WTC11 (cell line): ENCODE measurements at regions of chr17 and their contacts with region 1.

Region 1: GRCh38 chr17:48804925-48805411 is 12.1 kb downstream of the TTLL6 start:
- DNase-seq: peak; percentile 94
- ATAC-seq: peak; percentile 99
- H3K4me3 Mint-ChIP-seq: peak overlapping the region; percentile 24; the same call in 1 of the 2 replicates
- H3K27ac Mint-ChIP-seq: no peak overlapping the region
- H3K4me1 Mint-ChIP-seq: peaks cover 5% of the 10 kb centered on the region
- H3K27me3 Mint-ChIP-seq: no peaks in the 10 kb centered on the region
- CTCF ChIP-seq: peak; percentile 95

Region 2: DNA sequence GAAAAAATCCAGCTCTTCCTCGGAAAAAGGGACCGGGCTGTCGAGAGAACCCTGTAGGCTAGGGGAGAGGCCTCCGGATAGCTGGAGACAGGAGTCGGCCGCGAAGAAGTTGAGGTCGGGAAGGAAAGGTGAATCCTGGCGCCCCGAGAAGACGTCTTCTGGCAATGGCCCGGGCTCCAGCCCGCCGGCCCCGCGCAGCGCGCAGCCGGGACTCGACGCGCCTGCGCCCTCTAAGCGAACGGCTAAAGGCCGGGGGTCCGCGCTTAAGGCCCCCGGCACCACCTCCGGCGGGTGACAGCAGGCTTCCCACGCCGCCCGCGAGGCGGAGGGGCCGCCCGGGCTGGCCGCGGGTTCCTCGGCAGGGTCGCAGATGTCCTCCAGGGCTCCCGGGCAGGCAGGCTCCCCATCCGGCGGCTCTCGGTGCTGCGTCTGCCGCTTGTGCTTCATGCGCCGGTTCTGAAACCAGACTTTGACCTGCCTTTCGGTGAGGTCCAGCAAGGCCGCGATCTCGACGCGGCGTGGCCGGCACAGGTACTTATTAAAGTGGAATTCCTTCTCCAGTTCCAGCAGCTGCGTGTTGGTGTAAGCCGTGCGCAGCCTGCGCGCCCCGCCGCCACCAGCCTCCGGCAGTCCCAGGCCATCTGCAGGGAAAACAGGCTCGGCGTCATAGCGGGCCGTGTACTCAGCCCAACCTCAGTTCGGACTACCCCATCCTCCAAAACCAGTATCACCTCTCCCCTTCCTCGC is 261.7 kb before region 1 on chr17:
- CTCF ChIA-PET with region 1: no interaction called
- POLR2A ChIA-PET with region 1: no interaction called
- DNase-seq: peak; percentile 56
- ATAC-seq: peak; percentile 39
- H3K4me3 Mint-ChIP-seq: peak overlapping the region; percentile 69
- H3K27ac Mint-ChIP-seq: no peak overlapping the region
- H3K4me1 Mint-ChIP-seq: peaks cover 66% of the 10 kb centered on the region
- H3K27me3 Mint-ChIP-seq: peaks cover 98% of the 10 kb centered on the region; the same call in 1 of the 2 replicates
- CTCF ChIP-seq: no peak

Region 3: DNA sequence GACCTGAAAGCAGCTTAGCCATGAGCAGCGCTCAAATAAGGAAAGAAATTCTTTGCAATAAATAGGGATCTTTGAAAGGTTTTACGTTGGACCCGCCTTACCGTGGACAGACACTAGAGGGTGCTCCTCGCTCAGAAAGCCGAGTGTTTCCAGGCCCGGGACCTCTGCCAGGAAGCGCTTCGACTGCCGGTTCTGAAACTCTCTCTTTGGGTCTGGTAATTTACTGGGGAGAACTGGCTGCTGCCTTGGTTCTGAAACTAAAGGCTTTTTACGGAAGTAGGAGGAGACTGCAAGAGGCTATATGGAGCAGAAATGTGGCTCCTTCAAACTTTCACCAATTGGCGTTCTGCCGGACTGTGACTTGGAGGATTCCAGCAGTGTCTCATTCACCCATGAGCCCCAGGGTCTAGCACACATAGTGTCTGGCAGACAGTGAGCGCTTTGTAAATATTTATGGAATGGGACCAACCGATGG is 133.2 kb before region 1 on chr17:
- CTCF ChIA-PET with region 1: interaction called, 52 read pairs
- POLR2A ChIA-PET with region 1: interaction called, 3 read pairs
- DNase-seq: peak; percentile 87
- ATAC-seq: peak; percentile 96
- H3K4me3 Mint-ChIP-seq: peak overlapping the region; percentile 72
- H3K27ac Mint-ChIP-seq: no peak overlapping the region
- H3K4me1 Mint-ChIP-seq: peaks cover 12% of the 10 kb centered on the region
- H3K27me3 Mint-ChIP-seq: peaks cover 53% of the 10 kb centered on the region
- CTCF ChIP-seq: peak; percentile 79

Region 4: DNA sequence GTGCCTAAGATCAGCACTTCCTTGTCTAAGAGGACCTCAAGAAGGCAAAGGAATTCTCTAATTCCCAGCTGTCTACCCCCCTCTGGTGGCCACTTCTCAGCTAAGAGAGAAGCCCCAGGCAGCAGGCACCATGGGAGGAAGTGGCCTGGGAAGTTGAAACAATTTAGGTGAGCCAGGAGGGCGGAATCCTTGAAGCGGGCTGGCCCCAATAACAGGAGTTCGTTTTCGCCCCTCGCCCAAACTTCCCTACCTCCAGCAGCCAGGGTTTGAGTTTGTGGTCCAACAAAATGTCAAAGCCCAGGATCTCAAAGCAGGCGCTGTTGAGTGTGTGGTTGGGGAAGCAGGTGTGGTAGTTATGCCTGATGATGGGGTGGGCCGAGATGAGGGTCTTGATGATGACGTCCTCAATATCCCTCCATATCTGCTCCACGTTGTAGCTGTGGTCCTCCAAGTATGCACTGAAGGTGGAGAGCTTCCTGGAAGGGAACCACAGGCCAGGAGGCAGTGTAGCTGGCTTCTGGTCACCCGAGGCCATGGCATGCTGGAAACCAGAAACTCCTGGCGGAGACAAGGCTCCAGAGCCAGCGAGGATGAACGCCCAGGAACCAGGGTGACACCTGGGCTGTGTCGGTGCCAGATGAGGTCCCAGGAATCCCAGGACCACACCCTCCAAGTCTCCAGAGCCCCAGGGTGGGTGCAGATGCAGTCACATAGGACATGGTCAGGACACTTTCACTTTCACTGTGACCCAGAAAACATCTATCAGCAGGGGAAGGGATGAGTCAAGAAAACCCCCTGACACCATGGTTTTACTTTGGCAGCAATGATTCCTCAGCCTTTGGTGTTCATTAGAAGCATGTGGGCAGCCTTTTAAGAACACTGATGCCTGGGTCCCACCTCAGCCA is 13.6 kb before region 1 on chr17:
- CTCF ChIA-PET with region 1: interaction called, 39 read pairs
- POLR2A ChIA-PET with region 1: interaction called, 4 read pairs
- DNase-seq: peak; percentile 85
- ATAC-seq: peak; percentile 92
- H3K4me3 Mint-ChIP-seq: no peak overlapping the region
- H3K27ac Mint-ChIP-seq: no peak overlapping the region
- H3K4me1 Mint-ChIP-seq: peaks cover 9% of the 10 kb centered on the region
- H3K27me3 Mint-ChIP-seq: peaks cover 2% of the 10 kb centered on the region; the same call in 1 of the 2 replicates
- CTCF ChIP-seq: peak; percentile 45; the same call in 1 of the 2 replicates

Region 5: DNA sequence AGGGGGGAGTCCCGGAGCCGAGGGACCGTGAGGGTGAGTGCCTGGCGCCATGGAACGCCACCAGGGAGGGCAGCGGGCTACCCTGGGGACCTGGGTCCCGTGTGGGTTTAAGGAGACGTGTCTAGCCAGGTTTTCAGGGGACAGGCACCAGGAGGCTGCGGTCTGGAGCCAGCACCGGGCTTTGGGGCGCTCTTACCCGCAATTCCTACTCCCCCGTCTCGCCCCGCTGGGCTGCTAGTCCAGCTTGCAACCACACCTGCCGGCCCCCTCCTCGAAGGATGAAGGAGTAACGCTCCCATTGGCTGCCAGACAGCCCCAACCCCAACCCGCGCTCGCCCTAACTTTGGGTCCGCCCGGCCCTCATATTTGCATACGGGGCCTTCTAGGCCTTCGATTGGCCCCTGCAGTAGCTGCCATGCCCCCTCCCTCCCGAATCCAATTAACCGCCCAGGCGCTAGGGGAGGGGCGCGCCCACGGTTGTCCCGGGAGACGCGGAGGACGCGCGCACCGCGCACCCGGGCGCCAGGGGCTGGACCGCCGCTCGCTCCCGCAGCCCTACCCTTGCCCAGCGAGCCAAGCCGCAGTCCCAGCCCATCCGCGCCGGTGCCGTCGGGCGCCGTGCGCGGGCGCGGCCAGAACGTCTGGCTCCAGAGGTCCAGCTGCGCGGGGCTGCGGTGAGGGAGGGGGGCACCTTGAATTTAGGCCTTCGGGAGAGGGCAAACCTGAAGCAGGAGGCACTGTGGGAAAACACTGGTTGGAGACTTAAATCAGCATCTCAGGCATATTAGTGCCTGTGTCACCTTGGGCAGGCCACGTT is 12.0 kb after region 1 on chr17 and contains the start of gene TTLL6:
- CTCF ChIA-PET with region 1: interaction called, 98 read pairs
- POLR2A ChIA-PET with region 1: no interaction called
- DNase-seq: peak; percentile 97
- ATAC-seq: peak; percentile 95
- H3K4me3 Mint-ChIP-seq: peak within 1 kb of the TSS; percentile 94
- H3K27ac Mint-ChIP-seq: peak within 1 kb of the TSS; percentile 92
- H3K4me1 Mint-ChIP-seq: peaks cover 44% of the 10 kb centered on the region
- H3K27me3 Mint-ChIP-seq: peaks cover 5% of the 10 kb centered on the region; the same call in 1 of the 2 replicates
- CTCF ChIP-seq: no peak
- total RNA-seq, gene TTLL6: 3.4 to 7.0 TPM (median 4.6 TPM) in 3 replicates

Region 6: DNA sequence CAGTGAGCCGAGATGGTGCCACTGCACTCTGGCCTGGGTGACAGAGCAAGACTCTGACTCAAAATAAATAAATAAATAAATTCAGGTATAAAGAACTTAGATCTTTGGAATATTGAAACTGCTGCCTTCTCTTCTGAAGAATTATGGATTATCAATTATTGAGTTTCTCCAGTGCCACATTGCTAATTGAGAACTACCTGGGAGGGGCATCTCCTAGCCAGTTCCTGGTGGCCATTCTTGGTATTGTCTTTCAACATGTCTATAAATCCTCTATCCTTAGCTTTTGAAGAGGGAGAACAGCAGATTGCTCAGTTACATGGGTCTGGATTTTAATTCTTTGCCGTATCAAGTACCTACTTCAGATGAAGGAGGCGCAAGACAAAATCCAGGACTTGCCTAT is 55.1 kb after region 1 on chr17:
- CTCF ChIA-PET with region 1: interaction called, 22 read pairs
- POLR2A ChIA-PET with region 1: no interaction called
- DNase-seq: no peak
- ATAC-seq: peak; percentile 55
- H3K4me3 Mint-ChIP-seq: no peak overlapping the region
- H3K27ac Mint-ChIP-seq: no peak overlapping the region
- H3K4me1 Mint-ChIP-seq: 0 out of 2 replicates have a peak, but pooled peaks cover 9% of the 10 kb centered on the region
- H3K27me3 Mint-ChIP-seq: no peaks in the 10 kb centered on the region
- CTCF ChIP-seq: no peak

Region 7: GRCh38 chr17:48871551-48872351 is 66.8 kb after region 1 on chr17:
- CTCF ChIA-PET with region 1: interaction called, 355 read pairs
- POLR2A ChIA-PET with region 1: no interaction called
- DNase-seq: no peak
- ATAC-seq: no peak
- H3K4me3 Mint-ChIP-seq: no peak overlapping the region
- H3K27ac Mint-ChIP-seq: no peak overlapping the region; the same call in 1 of the 2 replicates
- H3K4me1 Mint-ChIP-seq: peaks cover 9% of the 10 kb centered on the region
- H3K27me3 Mint-ChIP-seq: no peaks in the 10 kb centered on the region
- CTCF ChIP-seq: no peak

Region 8: GRCh38 chr17:48892940-48893645 is 88.1 kb after region 1 on chr17:
- CTCF ChIA-PET with region 1: interaction called, 13 read pairs
- POLR2A ChIA-PET with region 1: no interaction called
- DNase-seq: no peak
- ATAC-seq: no peak
- H3K4me3 Mint-ChIP-seq: peak overlapping the region; percentile 96
- H3K27ac Mint-ChIP-seq: peak overlapping the region; percentile 98
- H3K4me1 Mint-ChIP-seq: peaks cover 11% of the 10 kb centered on the region
- H3K27me3 Mint-ChIP-seq: no peaks in the 10 kb centered on the region
- CTCF ChIP-seq: no peak